PC-9 (cell line): ENCODE measurements at regions of chr12 and their contacts with region 1.

Region 1: GRCh38 chr12:104276273-104277131 is 27.0 kb upstream of the EID3 start:
- DNase-seq: peak in 1 of 2 experiments; percentile 90
- H3K4me3 ChIP-seq: peak overlapping the region; percentile 59; the same call in 1 of the 2 replicates
- H3K27ac ChIP-seq: peak overlapping the region; percentile 99
- H3K4me1 ChIP-seq: peaks cover 75% of the 10 kb centered on the region
- H3K27me3 ChIP-seq: no peaks in the 10 kb centered on the region
- CTCF ChIP-seq: no peak

Region 2: GRCh38 chr12:104215638-104216297 is 60.7 kb before region 1 on chr12 and contains the start of gene TXNRD1:
- CTCF ChIA-PET with region 1: interaction called, 4 read pairs
- POLR2A ChIA-PET with region 1: interaction called, 23 read pairs
- intact Hi-C with region 1: loop called (anchors 1 kb)
- DNase-seq: peak; percentile 79 to 90
- H3K4me3 ChIP-seq: peak within 1 kb of the TSS; percentile 67
- H3K27ac ChIP-seq: peak within 1 kb of the TSS; percentile 99
- H3K4me1 ChIP-seq: peaks cover 56% of the 10 kb centered on the region
- H3K27me3 ChIP-seq: no peaks in the 10 kb centered on the region
- CTCF ChIP-seq: peak; percentile 88
- total RNA-seq, gene TXNRD1: 1,205 and 1,250 TPM in 2 replicates

Region 3: GRCh38 chr12:104258476-104259067 is 17.9 kb before region 1 on chr12:
- CTCF ChIA-PET with region 1: no interaction called
- POLR2A ChIA-PET with region 1: interaction called, 14 read pairs
- intact Hi-C with region 1: no loop called
- DNase-seq: no peak
- H3K4me3 ChIP-seq: no peak overlapping the region
- H3K27ac ChIP-seq: peak overlapping the region; percentile 38; the same call in 1 of the 2 replicates
- H3K4me1 ChIP-seq: peaks cover 30% of the 10 kb centered on the region
- H3K27me3 ChIP-seq: no peaks in the 10 kb centered on the region
- CTCF ChIP-seq: no peak

Region 4: DNA sequence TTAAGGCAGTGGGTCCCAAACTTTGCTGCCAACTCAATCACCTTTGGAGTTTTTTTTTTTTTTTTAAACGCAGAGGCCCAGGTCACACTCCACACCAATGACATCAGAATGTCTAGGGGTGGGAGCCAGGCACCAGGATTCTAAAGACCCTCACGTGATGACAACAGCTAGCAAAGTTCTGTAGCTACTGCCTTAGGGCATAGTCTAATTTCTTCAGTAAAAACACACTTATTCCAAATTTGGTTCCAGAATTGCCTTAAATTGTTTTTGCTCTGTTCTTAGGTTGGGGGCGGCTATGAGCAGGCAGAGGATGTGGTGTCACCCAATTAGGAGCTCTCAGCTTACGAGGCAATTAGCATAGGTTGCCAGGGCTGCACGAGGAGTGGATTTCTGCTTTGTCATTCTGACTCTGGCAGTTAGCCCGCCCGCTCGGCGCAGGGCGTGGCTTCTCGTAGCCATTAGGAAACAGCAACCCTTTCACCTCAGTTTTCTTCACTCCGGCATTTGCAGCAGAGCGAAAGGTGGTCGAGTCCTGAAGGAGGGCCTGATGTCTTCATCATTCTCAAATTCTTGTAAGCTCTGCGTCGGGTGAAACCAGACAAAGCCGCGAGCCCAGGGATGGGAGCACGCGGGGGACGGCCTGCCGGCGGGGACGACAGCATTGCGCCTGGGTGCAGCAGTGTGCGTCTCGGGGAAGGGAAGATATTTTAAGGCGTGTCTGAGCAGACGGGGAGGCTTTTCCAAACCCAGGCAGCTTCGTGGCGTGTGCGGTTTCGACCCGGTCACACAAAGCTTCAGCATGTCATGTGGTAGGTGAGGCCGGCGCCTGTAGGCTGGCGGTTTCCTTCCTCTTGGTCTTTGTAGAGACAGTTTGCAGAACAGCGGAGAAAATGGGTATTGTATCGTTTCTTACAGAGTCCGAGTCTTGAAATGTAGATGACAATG is 10.3 kb after region 1 on chr12:
- CTCF ChIA-PET with region 1: interaction called, 7 read pairs
- POLR2A ChIA-PET with region 1: interaction called, 41 read pairs
- intact Hi-C with region 1: loop called (anchors 1 kb)
- DNase-seq: peak; percentile 95 to 96
- H3K4me3 ChIP-seq: peak overlapping the region; percentile 96
- H3K27ac ChIP-seq: peak overlapping the region; percentile 99
- H3K4me1 ChIP-seq: peaks cover 43% of the 10 kb centered on the region
- H3K27me3 ChIP-seq: no peaks in the 10 kb centered on the region
- CTCF ChIP-seq: no peak

Region 5: DNA sequence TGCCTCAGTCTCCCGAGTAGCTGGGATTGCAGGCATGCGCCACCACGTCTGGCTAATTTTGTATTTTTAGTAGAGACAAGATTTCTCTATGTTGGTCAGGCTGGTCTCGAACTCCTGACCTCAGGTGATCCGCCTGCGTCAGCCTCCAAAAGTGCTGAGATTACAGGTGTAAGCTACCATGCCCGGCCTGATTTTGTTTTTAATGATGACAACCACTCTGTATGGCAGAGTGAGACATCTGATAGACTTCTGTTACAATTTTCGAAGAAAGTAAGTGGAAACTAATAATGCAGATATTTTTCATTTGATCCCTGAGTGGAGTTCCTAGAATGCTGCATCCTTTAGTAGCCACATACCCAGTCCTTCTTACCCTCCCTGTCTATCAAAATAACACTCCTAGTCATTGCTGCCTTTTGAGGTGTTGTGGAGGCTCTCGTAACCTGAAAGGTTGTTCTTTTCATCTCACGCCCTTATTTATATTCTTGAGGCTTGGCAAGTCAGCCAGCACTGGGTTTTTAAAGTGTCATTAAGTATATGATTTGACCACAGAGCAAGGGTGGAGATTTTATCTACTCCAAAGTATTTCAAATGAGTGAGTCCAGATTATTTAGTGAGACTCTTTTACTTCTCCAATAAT is 21.1 kb after region 1 on chr12:
- CTCF ChIA-PET with region 1: interaction called, 3 read pairs
- POLR2A ChIA-PET with region 1: interaction called, 21 read pairs
- intact Hi-C with region 1: no loop called
- DNase-seq: peak in 1 of 2 experiments; percentile 76
- H3K4me3 ChIP-seq: peak overlapping the region; percentile 59
- H3K27ac ChIP-seq: peak overlapping the region; percentile 86
- H3K4me1 ChIP-seq: peaks cover 58% of the 10 kb centered on the region
- H3K27me3 ChIP-seq: no peaks in the 10 kb centered on the region
- CTCF ChIP-seq: no peak